Posterior cingulate gyrus (tissue), 11 donors: ENCODE measurements at regions of chr10 and their contacts with region 1.

Region 1: DNA sequence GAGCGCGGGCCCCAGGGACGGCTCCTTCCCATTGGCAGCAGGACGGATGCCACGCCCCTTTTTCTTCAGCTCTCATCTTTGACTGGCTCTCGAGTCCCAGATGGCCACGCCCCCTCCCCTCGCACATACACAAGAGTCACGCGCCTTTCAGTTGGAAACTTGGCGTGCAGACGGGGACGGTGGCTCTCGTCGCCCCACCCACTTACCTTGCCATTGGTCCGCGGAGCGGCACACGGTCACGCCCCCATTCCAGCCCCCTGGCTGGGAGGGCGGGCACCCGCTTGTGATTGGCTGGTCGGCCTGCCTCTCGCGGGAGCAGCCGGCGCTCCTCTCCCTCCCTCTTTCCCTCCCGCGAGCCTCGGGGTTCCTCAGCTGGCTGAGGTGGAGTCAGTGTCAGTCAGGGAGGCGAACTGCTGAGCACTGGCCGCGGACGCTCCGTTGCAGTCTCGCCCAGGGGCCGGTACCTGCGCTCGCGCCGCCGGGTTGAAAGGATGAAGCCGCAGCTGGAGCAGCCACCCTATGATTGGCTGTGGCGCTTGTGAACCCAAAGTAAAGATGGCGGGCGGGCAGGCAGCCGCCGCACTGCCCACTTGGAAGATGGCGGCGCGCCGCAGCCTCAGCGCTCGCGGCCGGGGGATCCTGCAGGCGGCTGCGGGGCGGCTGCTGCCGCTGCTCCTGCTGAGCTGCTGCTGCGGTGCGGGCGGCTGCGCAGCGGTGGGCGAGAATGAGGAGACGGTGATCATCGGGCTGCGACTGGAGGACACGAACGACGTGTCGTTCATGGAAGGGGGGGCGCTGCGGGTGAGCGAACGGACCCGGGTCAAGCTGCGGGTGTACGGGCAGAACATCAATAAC is at the start of gene CNNM2:
- DNase-seq: peak; percentile 99 to 100 (median 100)

Region 2: GRCh38 chr10:102713814-102714620 is 204.2 kb before region 1 on chr10 and contains the start of gene ARL3:
- intact Hi-C with region 1: no loop called
- DNase-seq: peak; percentile 96 to 100 (median 98)

Region 3: GRCh38 chr10:103053659-103054581 is 135.7 kb after region 1 on chr10:
- intact Hi-C with region 1: loop called (anchors 5 kb)
- DNase-seq: peak; percentile 29 to 96 (median 68)

Region 4: GRCh38 chr10:103069453-103070331 is 151.5 kb after region 1 on chr10:
- intact Hi-C with region 1: loop called (anchors 1 kb)
- DNase-seq: peak in 7 of 10 donors; percentile 45 to 93 (median 66)

Region 5: GRCh38 chr10:103192451-103193106 is 274.4 kb after region 1 on chr10:
- intact Hi-C with region 1: loop called (anchors 5 kb)
- DNase-seq: peak; percentile 28 to 91 (median 58)